ENCODE measurements at regions of chr4 and their contacts with region 1.

Region 1: GRCh38 chr4:105146276-105147015 is at the start of gene TET2:
- DNase-seq: peak; percentile 46 to 91
- H3K4me3 ChIP-seq: peak within 1 kb of the TSS; percentile 89 to 91
- H3K27ac ChIP-seq: peak within 1 kb of the TSS; percentile 86 to 88
- H3K4me1 ChIP-seq: peaks cover 0 to 2% of the 10 kb centered on the region in 2 donors
- H3K27me3 ChIP-seq: no peaks in the 10 kb centered on the region
- CTCF ChIP-seq: peak in 1 of 3 experiments; percentile 14
- total RNA-seq, gene TET2: 14.8 TPM

Region 2: GRCh38 chr4:103982454-103982853 is 1164.0 kb before region 1 on chr4:
- intact Hi-C with region 1: no loop called
- DNase-seq: no peak
- H3K4me3 ChIP-seq: no peak overlapping the region
- H3K27ac ChIP-seq: no peak overlapping the region
- H3K4me1 ChIP-seq: no peaks in the 10 kb centered on the region
- H3K27me3 ChIP-seq: no peaks in the 10 kb centered on the region
- CTCF ChIP-seq: no peak

Region 3: DNA sequence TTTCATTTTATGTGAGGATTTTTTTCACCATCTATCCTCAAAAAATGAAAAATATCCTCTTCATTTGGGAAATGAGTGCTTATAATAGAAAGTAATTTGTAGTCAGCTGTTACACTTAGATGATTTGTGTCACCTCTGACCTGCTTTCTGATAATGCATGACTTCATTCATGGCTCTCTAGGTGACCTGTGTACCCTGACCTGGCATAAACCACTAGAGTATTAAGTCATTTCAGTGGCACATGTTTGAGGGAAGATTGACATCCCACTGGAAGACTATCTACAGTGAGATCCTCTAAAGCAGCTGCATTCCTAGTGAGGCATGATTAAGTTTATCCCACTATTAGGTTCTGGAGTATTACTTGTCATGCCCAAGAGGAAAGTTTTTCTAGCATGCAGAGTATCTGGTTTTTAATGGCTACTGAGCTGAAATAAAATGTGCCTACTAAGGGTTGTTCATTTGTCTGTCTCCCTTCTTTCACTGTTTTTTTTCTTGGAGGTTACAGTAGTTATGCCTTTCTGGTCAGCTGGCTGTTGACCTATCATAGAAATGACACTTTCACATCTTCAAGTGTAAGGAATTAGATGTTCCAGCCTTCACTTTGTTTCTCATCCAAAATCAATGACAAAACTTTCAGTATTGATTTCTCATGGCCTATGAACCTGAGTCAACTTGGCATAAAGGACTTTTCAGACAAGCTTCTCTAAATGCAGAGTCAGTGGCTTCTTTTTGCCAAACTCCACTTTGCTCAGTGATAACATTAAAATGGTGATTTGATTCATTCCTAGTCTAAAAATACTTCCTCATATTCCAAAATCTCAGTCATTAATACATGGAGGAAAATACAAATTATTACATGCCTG is 33.3 kb after region 1 on chr4:
- intact Hi-C with region 1: no loop called
- DNase-seq: no peak
- H3K4me3 ChIP-seq: no peak overlapping the region
- H3K27ac ChIP-seq: no peak overlapping the region
- H3K4me1 ChIP-seq: no peaks in the 10 kb centered on the region
- H3K27me3 ChIP-seq: no peaks in the 10 kb centered on the region
- CTCF ChIP-seq: no peak

Region 4: GRCh38 chr4:105329081-105329480 is 182.6 kb after region 1 on chr4:
- intact Hi-C with region 1: no loop called
- DNase-seq: no peak
- H3K4me3 ChIP-seq: no peak overlapping the region
- H3K27ac ChIP-seq: no peak overlapping the region
- H3K4me1 ChIP-seq: no peaks in the 10 kb centered on the region
- H3K27me3 ChIP-seq: no peaks in the 10 kb centered on the region
- CTCF ChIP-seq: no peak

Region 5: GRCh38 chr4:105399532-105400161 is 253.2 kb after region 1 on chr4:
- intact Hi-C with region 1: loop called (anchors 10 kb)
- DNase-seq: no peak
- H3K4me3 ChIP-seq: no peak overlapping the region
- H3K27ac ChIP-seq: no peak overlapping the region
- H3K4me1 ChIP-seq: no peaks in the 10 kb centered on the region
- H3K27me3 ChIP-seq: no peaks in the 10 kb centered on the region
- CTCF ChIP-seq: no peak

Region 6: DNA sequence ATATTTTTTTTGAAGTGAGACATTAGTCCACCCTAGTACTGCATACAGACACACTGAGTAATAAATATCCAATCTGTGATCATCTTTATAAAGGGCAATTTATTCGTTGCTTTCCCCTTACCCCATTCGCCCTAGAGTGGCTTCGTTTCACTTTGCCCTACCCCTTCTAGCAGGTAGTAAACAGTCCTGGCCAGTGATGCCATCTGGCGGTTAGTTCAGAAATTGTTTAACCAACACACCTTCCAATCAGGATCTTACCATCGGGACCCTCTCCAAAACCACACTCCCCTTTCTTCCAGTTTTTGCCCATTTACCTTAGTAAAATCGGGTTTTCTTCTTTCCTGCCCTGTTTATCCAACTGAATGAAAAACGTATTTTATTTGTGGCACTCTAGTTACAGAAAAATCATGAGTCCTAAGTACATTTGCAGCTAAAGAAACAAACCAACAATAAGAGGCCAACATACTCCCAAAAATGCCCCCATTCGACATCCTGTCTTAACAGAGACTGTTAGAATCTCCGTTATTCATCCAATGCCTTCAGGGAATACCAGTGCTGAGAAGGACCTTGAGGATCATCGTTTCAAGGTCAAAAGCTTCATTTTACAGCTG is 325.2 kb after region 1 on chr4:
- intact Hi-C with region 1: loop called (anchors 1 kb)
- DNase-seq: peak; percentile 13 to 75
- H3K4me3 ChIP-seq: peak overlapping the region; percentile 91 to 97
- H3K27ac ChIP-seq: peak overlapping the region; percentile 98 to 99
- H3K4me1 ChIP-seq: peaks cover 8 to 16% of the 10 kb centered on the region in 2 donors
- H3K27me3 ChIP-seq: no peaks in the 10 kb centered on the region
- CTCF ChIP-seq: peak; percentile 58 to 72 (median 64)

Region 7: DNA sequence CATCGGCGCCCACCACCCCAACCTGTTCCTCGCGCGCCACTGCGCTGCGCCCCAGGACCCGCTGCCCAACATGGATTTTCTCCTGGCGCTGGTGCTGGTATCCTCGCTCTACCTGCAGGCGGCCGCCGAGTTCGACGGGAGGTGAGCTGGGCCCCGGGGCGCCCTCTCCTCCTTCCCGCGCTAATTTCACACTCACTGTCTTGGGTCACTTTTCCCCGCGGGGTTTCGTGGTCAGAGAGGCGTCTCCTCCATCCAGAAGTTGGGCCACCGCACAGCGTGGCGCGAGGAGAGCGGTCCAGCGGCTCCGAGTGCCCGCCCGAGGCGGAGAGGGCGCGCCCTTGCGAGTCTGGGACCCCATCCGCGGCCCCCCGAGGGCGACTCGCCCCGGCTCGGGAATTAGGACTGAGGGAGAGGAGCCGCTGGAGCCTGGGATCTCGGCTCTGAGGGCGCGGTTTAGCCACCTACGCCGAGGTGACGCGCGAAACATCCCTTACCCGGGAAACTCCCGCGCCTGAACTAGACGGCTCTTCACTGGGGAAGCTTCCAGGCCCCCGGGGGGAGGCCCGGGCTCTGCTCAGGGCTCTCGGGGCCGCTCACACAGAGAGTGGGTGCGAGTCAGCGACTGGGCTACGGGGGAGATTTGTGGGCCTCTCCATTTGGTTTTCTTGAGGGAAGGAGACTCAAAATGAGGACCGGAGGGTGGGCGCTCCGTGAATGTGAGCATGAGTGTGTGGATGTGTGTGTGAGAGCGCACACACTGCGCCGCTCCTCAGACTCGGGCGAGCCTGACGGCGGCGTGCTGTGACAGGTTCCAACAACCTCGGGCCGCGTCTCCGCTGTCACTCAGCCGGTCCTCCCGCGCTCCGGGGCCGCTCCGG is 749.4 kb after region 1 on chr4:
- intact Hi-C with region 1: loop called (anchors 10 kb)
- DNase-seq: peak in 1 of 2 donors; percentile 74
- H3K4me3 ChIP-seq: peak overlapping the region; percentile 81 to 83
- H3K27ac ChIP-seq: peak overlapping the region; percentile 88 to 94
- H3K4me1 ChIP-seq: peaks cover 0 to 6% of the 10 kb centered on the region in 2 donors
- H3K27me3 ChIP-seq: no peaks in the 10 kb centered on the region
- CTCF ChIP-seq: peak in 2 of 3 experiments; percentile 20 to 34

Measured in ascending aorta (tissue), 2 donors.